Left ventricle myocardium inferior (tissue), 1 donor: ENCODE measurements at regions of chr17 and their contacts with region 1.

Region 1: GRCh38 chr17:36950029-36950428 is 1.3 kb downstream of the AATF start:
- DNase-seq: no peak
- H3K4me3 ChIP-seq: peak overlapping the region; percentile 89
- H3K27ac ChIP-seq: no peak overlapping the region
- H3K4me1 ChIP-seq: peaks cover 30% of the 10 kb centered on the region
- H3K27me3 ChIP-seq: peaks cover 28% of the 10 kb centered on the region
- CTCF ChIP-seq: no peak

Region 2: GRCh38 chr17:36545465-36546417 is 404.3 kb before region 1 on chr17:
- intact Hi-C with region 1: loop called (anchors 5 kb)
- DNase-seq: peak; percentile 96
- H3K4me3 ChIP-seq: peak overlapping the region; percentile 76
- H3K27ac ChIP-seq: peak overlapping the region; percentile 100
- H3K4me1 ChIP-seq: peaks cover 68% of the 10 kb centered on the region
- H3K27me3 ChIP-seq: no peaks in the 10 kb centered on the region
- CTCF ChIP-seq: peak; percentile 29